WTC11 (cell line): ENCODE measurements at regions of chr7 and their contacts with region 1.

Region 1: GRCh38 chr7:35906191-35906908 is 105.5 kb downstream of the SEPTIN7 start:
- DNase-seq: peak; percentile 59
- ATAC-seq: peak; percentile 84
- H3K4me3 Mint-ChIP-seq: no peak overlapping the region
- H3K27ac Mint-ChIP-seq: peak overlapping the region; percentile 78; the same call in 1 of the 2 replicates
- H3K4me1 Mint-ChIP-seq: peaks cover 21% of the 10 kb centered on the region
- H3K27me3 Mint-ChIP-seq: no peaks in the 10 kb centered on the region
- CTCF ChIP-seq: peak; percentile 82

Region 2: GRCh38 chr7:35701287-35701900 is 205.0 kb before region 1 on chr7:
- CTCF ChIA-PET with region 1: interaction called, 12 read pairs
- POLR2A ChIA-PET with region 1: no interaction called
- DNase-seq: no peak
- ATAC-seq: no peak
- H3K4me3 Mint-ChIP-seq: no peak overlapping the region
- H3K27ac Mint-ChIP-seq: no peak overlapping the region
- H3K4me1 Mint-ChIP-seq: peaks cover 5% of the 10 kb centered on the region
- H3K27me3 Mint-ChIP-seq: no peaks in the 10 kb centered on the region; the same call in 1 of the 2 replicates
- CTCF ChIP-seq: no peak

Region 3: DNA sequence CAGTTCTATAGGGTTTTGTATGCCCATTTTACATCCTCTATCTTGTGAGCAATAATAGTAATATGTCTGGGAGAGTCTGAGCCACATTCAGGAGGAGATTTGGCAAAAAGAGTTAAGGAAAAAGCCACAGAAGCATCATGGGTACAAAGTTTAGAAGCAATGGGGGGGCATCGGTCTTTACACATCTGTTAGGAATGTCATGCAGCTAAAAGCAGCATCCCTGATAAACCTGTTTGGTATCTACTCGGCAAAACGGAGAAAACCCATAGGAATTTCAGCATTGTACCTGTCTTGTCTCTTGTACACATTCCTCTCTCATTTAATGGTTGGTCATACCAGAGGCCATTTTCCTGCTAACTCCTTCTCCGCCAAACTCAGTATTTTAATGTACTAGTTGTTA is 198.9 kb before region 1 on chr7:
- CTCF ChIA-PET with region 1: interaction called, 59 read pairs
- POLR2A ChIA-PET with region 1: interaction called, 5 read pairs
- DNase-seq: no peak
- ATAC-seq: no peak
- H3K4me3 Mint-ChIP-seq: no peak overlapping the region
- H3K27ac Mint-ChIP-seq: no peak overlapping the region
- H3K4me1 Mint-ChIP-seq: peaks cover 6% of the 10 kb centered on the region
- H3K27me3 Mint-ChIP-seq: no peaks in the 10 kb centered on the region; the same call in 1 of the 2 replicates
- CTCF ChIP-seq: no peak